Posterior cingulate gyrus (tissue), 11 donors: ENCODE measurements at regions of chr17 and their contacts with region 1.

Region 1: GRCh38 chr17:41962768-41963434 is 3.7 kb upstream of the CNP start:
- DNase-seq: peak; percentile 70 to 97 (median 84)

Region 2: GRCh38 chr17:41738077-41738735 is 224.7 kb before region 1 on chr17:
- intact Hi-C with region 1: loop called (anchors 5 kb)
- DNase-seq: peak; percentile 58 to 97 (median 83)

Region 3: GRCh38 chr17:42009170-42009569 is 46.3 kb after region 1 on chr17:
- intact Hi-C with region 1: loop called (anchors 1 kb)
- DNase-seq: peak in 8 of 10 donors; percentile 46 to 96 (median 71)

Region 4: DNA sequence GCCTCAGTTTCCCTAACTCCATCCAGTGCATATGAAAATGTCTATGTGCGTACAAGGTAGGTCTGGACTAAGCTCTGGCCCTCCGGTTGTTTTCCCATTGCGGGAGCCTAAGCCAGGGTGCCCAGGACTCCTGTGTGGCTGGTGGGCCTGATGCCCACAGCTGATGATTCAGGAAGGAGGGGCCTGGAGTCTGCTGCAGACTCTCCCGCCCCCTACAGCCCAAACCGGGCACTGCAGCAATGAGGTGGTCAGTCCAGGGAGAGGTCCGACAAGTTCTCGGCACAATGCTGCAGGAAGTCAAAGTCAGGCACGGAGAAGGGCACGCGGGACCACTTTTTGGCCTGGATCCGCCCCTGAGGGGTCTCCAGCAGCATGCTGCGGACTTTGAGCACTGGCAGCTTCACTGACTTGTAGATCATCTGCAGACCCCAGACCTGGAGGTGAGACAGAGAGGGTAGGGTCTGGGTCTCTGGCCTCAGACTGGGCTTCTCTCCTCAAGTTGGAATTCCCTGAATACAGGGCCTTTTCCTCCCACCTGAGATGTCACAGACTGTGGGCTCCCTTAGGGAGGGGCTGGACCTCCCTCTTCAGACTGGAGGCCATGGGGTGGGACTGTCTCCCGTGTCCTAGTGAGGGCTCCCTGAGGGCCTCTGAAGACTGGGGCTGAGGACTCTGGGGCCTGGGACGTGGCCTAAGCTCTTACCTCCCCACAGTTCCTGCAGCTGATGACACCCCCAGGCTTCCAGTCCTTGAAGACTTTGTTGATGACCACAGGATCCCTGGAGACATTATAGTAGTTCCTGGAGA is 138.8 kb after region 1 on chr17:
- intact Hi-C with region 1: loop called (anchors 5 kb)
- DNase-seq: peak; percentile 57 to 95 (median 82)

Region 5: DNA sequence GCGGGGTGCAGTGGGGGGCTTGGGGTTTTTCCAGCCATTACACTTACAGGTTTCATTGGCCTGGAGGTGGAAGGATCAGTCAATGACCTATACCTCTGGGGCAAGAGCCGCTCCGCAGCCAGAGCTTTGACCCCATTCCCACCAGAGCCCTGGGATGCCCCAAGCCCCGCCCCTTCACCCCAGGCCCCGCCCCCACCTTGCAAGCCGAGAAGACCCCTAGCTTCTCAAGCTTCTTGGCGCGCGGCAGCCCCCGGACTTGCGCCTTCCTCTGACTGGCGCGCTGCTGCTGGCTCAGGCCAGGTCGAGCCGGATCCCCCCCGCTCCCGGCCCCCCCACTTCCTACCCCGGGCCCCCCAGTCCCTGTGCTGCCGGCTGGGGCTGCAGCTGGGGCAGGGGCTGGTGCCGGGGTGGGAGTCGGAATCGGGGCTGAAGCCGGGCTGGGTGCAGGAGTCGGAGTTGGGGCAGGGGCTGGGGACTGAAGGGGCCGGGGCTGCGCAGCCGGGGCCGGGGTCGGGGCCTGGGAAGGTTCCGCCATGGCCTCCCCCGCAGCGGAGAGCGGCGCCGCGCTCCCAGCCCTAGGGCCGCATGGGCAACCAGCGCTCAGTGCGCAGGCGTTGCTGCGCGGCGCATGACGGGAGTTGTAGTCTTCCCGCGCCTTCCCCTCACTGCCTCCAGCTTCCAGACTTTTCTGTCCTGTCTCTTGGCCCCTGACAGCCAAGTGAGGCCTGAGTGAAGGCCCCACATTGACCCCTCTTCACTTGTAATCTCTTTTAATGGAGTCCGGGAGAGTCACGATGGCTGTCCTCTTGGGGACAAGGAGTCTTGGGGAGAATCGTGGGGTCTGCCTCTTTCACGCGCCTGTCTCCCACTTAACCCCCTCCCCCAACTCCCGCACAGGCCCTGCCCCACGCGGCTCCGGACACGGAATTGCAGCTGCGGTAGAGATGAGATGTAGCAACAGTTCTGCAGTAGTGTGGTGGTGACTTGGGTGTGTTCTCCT is 158.2 kb after region 1 on chr17 and contains the start of gene KAT2A:
- intact Hi-C with region 1: loop called (anchors 5 kb)
- DNase-seq: peak; percentile 82 to 98 (median 88)